ENCODE measurements at regions of chr14 and their contacts with region 1.

Region 1: GRCh38 chr14:33068626-33069025 is 129.9 kb downstream of the NPAS3 start:
- DNase-seq: no peak
- ATAC-seq: no peak
- H3K4me3 Mint-ChIP-seq: no peak overlapping the region
- H3K27ac Mint-ChIP-seq: no peak overlapping the region
- H3K4me1 Mint-ChIP-seq: no peaks in the 10 kb centered on the region
- H3K27me3 Mint-ChIP-seq: no peaks in the 10 kb centered on the region
- CTCF ChIP-seq: no peak

Region 2: GRCh38 chr14:33045760-33046159 is 22.9 kb before region 1 on chr14:
- CTCF ChIA-PET with region 1: no interaction called
- POLR2A ChIA-PET with region 1: no interaction called
- intact Hi-C with region 1: loop called (anchors 1 kb)
- DNase-seq: no peak
- ATAC-seq: no peak
- H3K4me3 Mint-ChIP-seq: no peak overlapping the region
- H3K27ac Mint-ChIP-seq: no peak overlapping the region
- H3K4me1 Mint-ChIP-seq: no peaks in the 10 kb centered on the region
- H3K27me3 Mint-ChIP-seq: no peaks in the 10 kb centered on the region
- CTCF ChIP-seq: no peak

Region 3: GRCh38 chr14:33163109-33163508 is 94.5 kb after region 1 on chr14:
- CTCF ChIA-PET with region 1: no interaction called
- POLR2A ChIA-PET with region 1: no interaction called
- intact Hi-C with region 1: no loop called
- DNase-seq: no peak
- ATAC-seq: no peak
- H3K4me3 Mint-ChIP-seq: no peak overlapping the region
- H3K27ac Mint-ChIP-seq: no peak overlapping the region
- H3K4me1 Mint-ChIP-seq: no peaks in the 10 kb centered on the region
- H3K27me3 Mint-ChIP-seq: no peaks in the 10 kb centered on the region
- CTCF ChIP-seq: no peak

Region 4: GRCh38 chr14:33377596-33378390 is 309.2 kb after region 1 on chr14:
- CTCF ChIA-PET with region 1: no interaction called
- POLR2A ChIA-PET with region 1: no interaction called
- intact Hi-C with region 1: no loop called
- DNase-seq: no peak
- ATAC-seq: no peak
- H3K4me3 Mint-ChIP-seq: no peak overlapping the region
- H3K27ac Mint-ChIP-seq: no peak overlapping the region
- H3K4me1 Mint-ChIP-seq: no peaks in the 10 kb centered on the region
- H3K27me3 Mint-ChIP-seq: no peaks in the 10 kb centered on the region
- CTCF ChIP-seq: no peak

Measured in activated B cell treated with CpG ODN at 0.5 μM for 24 hours (primary cell).